ENCODE measurements at regions of chr14 and their contacts with region 1.

Region 1: GRCh38 chr14:22002860-22003309 is 329.3 kb upstream of the OR4E1 start:
- DNase-seq: peak; percentile 86
- ATAC-seq: peak; percentile 80
- H3K4me3 Mint-ChIP-seq: peak overlapping the region; percentile 77
- H3K27ac Mint-ChIP-seq: peak overlapping the region; percentile 76
- H3K4me1 Mint-ChIP-seq: peaks cover 40% of the 10 kb centered on the region
- H3K27me3 Mint-ChIP-seq: no peaks in the 10 kb centered on the region

Region 2: GRCh38 chr14:21802441-21802840 is 200.4 kb before region 1 on chr14:
- CTCF ChIA-PET with region 1: no interaction called
- POLR2A ChIA-PET with region 1: no interaction called
- DNase-seq: no peak
- ATAC-seq: no peak
- H3K4me3 Mint-ChIP-seq: no peak overlapping the region
- H3K27ac Mint-ChIP-seq: no peak overlapping the region
- H3K4me1 Mint-ChIP-seq: no peaks in the 10 kb centered on the region
- H3K27me3 Mint-ChIP-seq: peaks cover 11% of the 10 kb centered on the region

Region 3: DNA sequence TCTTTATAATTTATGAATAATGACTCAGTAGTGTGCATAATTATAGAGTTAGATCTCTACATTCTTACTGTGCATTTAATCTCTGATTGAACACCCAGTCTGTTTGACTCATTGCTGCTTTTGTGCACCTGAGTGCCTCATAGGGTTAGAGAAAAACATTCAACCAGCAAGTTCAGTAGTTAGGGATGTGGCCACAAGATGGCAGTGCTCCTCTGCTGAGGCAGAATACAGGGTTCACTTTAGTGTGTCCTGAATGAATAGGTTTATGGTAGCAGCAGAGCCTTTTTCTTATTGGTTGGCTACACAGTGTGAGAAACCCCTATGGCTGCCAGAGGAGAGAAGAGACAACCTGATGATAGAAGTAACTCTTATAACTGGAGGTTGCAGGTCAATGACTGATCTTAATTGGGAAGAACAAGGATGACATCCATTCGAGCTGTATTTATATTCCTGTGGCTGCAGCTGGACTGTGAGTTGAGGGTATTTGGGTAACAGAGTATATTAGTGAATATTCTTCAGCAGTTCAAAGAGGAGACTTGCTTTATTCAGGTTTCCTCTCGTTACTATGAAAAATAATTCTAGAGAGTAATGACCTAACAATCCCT is 134.3 kb before region 1 on chr14:
- CTCF ChIA-PET with region 1: no interaction called
- POLR2A ChIA-PET with region 1: no interaction called
- DNase-seq: peak; percentile 87
- ATAC-seq: peak; percentile 98
- H3K4me3 Mint-ChIP-seq: peak overlapping the region; percentile 58
- H3K27ac Mint-ChIP-seq: peak overlapping the region; percentile 65
- H3K4me1 Mint-ChIP-seq: peaks cover 24% of the 10 kb centered on the region
- H3K27me3 Mint-ChIP-seq: peaks cover 3% of the 10 kb centered on the region

Region 4: GRCh38 chr14:21978184-21978998 is 24.5 kb before region 1 on chr14:
- CTCF ChIA-PET with region 1: interaction called, 82 read pairs
- POLR2A ChIA-PET with region 1: interaction called, 4 read pairs
- DNase-seq: peak; percentile 77
- ATAC-seq: peak; percentile 84
- H3K4me3 Mint-ChIP-seq: peak overlapping the region; percentile 69
- H3K27ac Mint-ChIP-seq: peak overlapping the region; percentile 53
- H3K4me1 Mint-ChIP-seq: peaks cover 23% of the 10 kb centered on the region
- H3K27me3 Mint-ChIP-seq: peaks cover 27% of the 10 kb centered on the region

Region 5: DNA sequence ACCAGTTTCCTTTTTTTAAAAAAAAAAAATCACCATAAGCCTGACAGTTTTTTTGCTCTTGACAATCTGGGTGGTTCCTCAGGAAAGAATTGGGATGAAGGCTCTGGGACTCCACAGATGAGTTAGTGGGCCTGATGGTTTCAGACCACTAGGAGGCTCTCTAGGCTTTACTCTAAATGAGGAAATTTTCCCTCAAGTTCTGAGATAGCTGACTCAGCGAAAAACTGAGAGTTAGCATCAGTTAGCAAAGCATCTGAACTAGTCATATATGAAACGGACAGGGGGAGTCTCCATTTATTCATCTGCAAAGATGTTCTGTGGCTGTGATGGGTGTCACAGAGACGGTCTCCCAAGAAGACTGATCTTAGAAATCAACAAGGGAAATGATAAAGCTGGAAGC is 14.9 kb before region 1 on chr14:
- CTCF ChIA-PET with region 1: interaction called, 64 read pairs
- POLR2A ChIA-PET with region 1: no interaction called
- DNase-seq: peak; percentile 35
- ATAC-seq: peak; percentile 39
- H3K4me3 Mint-ChIP-seq: no peak overlapping the region
- H3K27ac Mint-ChIP-seq: peak overlapping the region; percentile 66
- H3K4me1 Mint-ChIP-seq: peaks cover 32% of the 10 kb centered on the region
- H3K27me3 Mint-ChIP-seq: peaks cover 4% of the 10 kb centered on the region

Region 6: DNA sequence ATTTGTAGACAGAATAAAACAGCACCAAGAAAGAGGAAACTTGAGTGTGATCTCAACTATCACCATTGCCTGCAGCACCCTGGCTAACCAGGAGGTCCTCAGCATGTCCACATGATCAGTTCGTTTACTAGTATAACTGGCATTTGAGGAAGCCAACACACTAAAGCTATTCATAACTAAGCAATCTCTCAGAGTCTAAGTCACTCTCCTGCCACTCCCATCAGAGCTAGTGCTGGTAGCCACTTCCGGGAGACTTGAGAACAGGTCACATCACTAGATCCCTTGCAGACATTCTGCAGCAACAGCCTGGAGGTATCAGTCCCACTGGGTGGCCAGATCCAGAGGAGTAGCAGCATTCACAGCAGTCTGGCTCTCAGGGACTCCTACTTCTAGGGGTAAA is 23.6 kb after region 1 on chr14:
- CTCF ChIA-PET with region 1: interaction called, 12 read pairs
- POLR2A ChIA-PET with region 1: no interaction called
- DNase-seq: no peak
- ATAC-seq: peak; percentile 58
- H3K4me3 Mint-ChIP-seq: peak overlapping the region; percentile 22
- H3K27ac Mint-ChIP-seq: peak overlapping the region; percentile 61
- H3K4me1 Mint-ChIP-seq: peaks cover 8% of the 10 kb centered on the region
- H3K27me3 Mint-ChIP-seq: peaks cover 7% of the 10 kb centered on the region

Region 7: DNA sequence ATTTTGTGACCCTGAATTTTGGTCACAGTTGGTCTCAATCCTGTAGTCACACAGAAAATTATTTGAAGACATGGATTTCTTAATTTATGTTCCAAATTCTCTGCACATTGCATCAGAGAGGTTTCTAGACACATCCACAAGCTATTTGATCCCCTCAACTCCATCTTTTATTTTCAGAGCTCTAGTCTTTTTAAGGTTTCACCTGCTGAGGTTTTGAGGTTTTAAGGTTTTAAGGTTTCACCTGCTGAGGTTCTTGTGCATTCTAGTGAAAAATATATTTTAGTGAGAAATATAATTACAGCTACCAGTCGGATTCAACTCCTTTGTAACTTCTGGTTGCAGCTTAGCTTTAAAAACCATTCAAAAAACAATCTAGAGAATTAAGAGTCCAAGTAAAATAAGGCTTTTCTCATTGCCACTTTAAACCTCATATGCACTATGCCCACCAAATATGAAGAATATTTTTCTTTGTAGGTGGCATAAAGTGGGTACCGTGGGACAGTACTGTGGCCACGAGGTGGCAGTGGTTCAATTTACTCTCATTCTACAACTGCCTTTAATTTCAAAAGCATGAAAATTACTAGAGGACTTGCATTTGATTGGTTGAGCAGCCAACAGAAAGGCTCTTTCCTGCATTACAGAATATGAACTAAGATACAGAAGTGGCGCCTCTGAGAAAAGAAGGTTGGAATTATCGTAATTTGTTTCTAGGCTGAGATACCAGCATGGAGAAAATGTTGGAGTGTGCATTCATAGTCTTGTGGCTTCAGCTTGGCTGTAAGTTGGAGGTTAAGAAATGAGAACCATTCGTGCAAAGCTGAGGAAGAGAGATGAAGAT is 37.3 kb after region 1 on chr14:
- CTCF ChIA-PET with region 1: interaction called, 17 read pairs
- POLR2A ChIA-PET with region 1: no interaction called
- DNase-seq: peak; percentile 71
- ATAC-seq: peak; percentile 91
- H3K4me3 Mint-ChIP-seq: peak overlapping the region; percentile 76
- H3K27ac Mint-ChIP-seq: peak overlapping the region; percentile 81
- H3K4me1 Mint-ChIP-seq: peaks cover 19% of the 10 kb centered on the region
- H3K27me3 Mint-ChIP-seq: peaks cover 6% of the 10 kb centered on the region

Region 8: GRCh38 chr14:22047115-22047514 is 44.2 kb after region 1 on chr14:
- CTCF ChIA-PET with region 1: interaction called, 19 read pairs
- POLR2A ChIA-PET with region 1: no interaction called
- DNase-seq: peak; percentile 65
- ATAC-seq: peak; percentile 94
- H3K4me3 Mint-ChIP-seq: peak overlapping the region; percentile 61
- H3K27ac Mint-ChIP-seq: peak overlapping the region; percentile 87
- H3K4me1 Mint-ChIP-seq: peaks cover 49% of the 10 kb centered on the region
- H3K27me3 Mint-ChIP-seq: peaks cover 2% of the 10 kb centered on the region

Region 9: DNA sequence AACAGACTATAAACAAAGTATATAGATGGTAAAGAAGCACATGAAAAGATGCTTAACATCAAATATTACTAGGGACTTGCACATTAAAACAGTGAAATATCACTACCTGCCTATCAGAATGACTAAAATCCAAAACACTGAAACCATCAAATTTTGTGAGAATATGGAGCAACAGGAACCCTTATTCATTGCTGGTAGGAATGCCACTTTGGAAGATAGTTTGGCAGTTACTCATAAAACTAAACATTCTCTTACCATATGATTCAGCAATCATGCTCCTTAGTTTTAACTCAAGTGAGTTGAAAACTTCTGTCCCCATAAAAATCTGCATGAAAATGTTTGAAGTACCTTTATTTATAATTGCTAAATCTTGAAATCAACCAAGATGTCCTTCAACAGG is 288.5 kb after region 1 on chr14:
- CTCF ChIA-PET with region 1: no interaction called
- POLR2A ChIA-PET with region 1: no interaction called
- DNase-seq: no peak
- ATAC-seq: no peak
- H3K4me3 Mint-ChIP-seq: no peak overlapping the region
- H3K27ac Mint-ChIP-seq: no peak overlapping the region
- H3K4me1 Mint-ChIP-seq: no peaks in the 10 kb centered on the region
- H3K27me3 Mint-ChIP-seq: no peaks in the 10 kb centered on the region